ENCODE measurements at regions of chr15 and their contacts with region 1.

Region 1: DNA sequence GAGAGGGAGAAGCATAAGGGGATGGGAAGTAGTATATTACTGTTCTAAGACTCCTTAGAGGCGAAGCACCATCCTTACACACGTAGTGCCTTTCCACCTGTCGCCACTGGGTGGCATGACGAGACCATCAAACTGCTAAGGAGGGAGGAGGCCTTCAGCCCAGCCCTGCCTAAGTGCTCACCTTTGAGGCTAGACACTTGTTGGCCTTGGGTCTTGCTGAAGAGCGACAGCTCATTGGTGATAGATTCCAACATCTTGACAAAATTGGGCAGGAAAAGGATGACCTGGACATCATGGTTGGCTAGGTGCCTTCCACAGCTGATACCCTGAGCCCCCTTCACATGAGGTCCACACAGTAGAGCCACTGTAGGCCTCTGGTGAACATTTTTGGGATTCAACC is 19.6 kb downstream of the CLK3 start:
- DNase-seq: peak; percentile 41 to 74 (median 65)
- ATAC-seq: peak; percentile 88
- H3K4me3 ChIP-seq: no peak overlapping the region
- H3K4me3 Mint-ChIP-seq: no peak overlapping the region
- H3K27ac ChIP-seq: no peak overlapping the region
- H3K27ac Mint-ChIP-seq: peak overlapping the region in 2 of 9 donors; percentile 25 to 74
- H3K4me1 ChIP-seq: no peaks in the 10 kb centered on the region
- H3K4me1 Mint-ChIP-seq: peaks cover 0 to 7% (median 0%) of the 10 kb centered on the region in 7 donors
- H3K27me3 ChIP-seq: no peaks in the 10 kb centered on the region
- H3K27me3 Mint-ChIP-seq: no peaks in the 10 kb centered on the region

Region 2: GRCh38 chr15:74373731-74374647 is 261.2 kb before region 1 on chr15:
- CTCF ChIA-PET with region 1: interaction called, 6 read pairs
- POLR2A ChIA-PET with region 1: no interaction called
- intact Hi-C with region 1: loop called (anchors 1 kb)
- DNase-seq: peak; percentile 82 to 94 (median 91)
- ATAC-seq: peak; percentile 97
- H3K4me3 ChIP-seq: peak overlapping the region; percentile 98
- H3K4me3 Mint-ChIP-seq: peak overlapping the region; percentile 68 to 89 (median 84)
- H3K27ac ChIP-seq: peak overlapping the region; percentile 62
- H3K27ac Mint-ChIP-seq: peak overlapping the region; percentile 18 to 82 (median 40)
- H3K4me1 ChIP-seq: peaks cover 9% of the 10 kb centered on the region in 2 donors
- H3K4me1 Mint-ChIP-seq: peaks cover 0 to 32% (median 15%) of the 10 kb centered on the region in 7 donors
- H3K27me3 ChIP-seq: no peaks in the 10 kb centered on the region
- H3K27me3 Mint-ChIP-seq: peaks cover 0 to 31% (median 5%) of the 10 kb centered on the region in 5 donors

Region 3: GRCh38 chr15:74417246-74417645 is 218.0 kb before region 1 on chr15:
- CTCF ChIA-PET with region 1: no interaction called
- POLR2A ChIA-PET with region 1: no interaction called
- intact Hi-C with region 1: no loop called
- DNase-seq: no peak
- ATAC-seq: no peak
- H3K4me3 ChIP-seq: no peak overlapping the region
- H3K4me3 Mint-ChIP-seq: no peak overlapping the region
- H3K27ac ChIP-seq: no peak overlapping the region
- H3K27ac Mint-ChIP-seq: no peak overlapping the region
- H3K4me1 ChIP-seq: peaks cover 0 to 22% of the 10 kb centered on the region in 2 donors
- H3K4me1 Mint-ChIP-seq: peaks cover 0 to 42% (median 4%) of the 10 kb centered on the region in 7 donors
- H3K27me3 ChIP-seq: no peaks in the 10 kb centered on the region
- H3K27me3 Mint-ChIP-seq: no peaks in the 10 kb centered on the region

Region 4: GRCh38 chr15:74739905-74740304 is 104.7 kb after region 1 on chr15:
- CTCF ChIA-PET with region 1: no interaction called
- POLR2A ChIA-PET with region 1: no interaction called
- intact Hi-C with region 1: no loop called
- DNase-seq: no peak
- ATAC-seq: no peak
- H3K4me3 ChIP-seq: no peak overlapping the region
- H3K4me3 Mint-ChIP-seq: no peak overlapping the region
- H3K27ac ChIP-seq: no peak overlapping the region
- H3K27ac Mint-ChIP-seq: no peak overlapping the region
- H3K4me1 ChIP-seq: no peaks in the 10 kb centered on the region
- H3K4me1 Mint-ChIP-seq: peaks cover 0 to 5% (median 0%) of the 10 kb centered on the region in 7 donors
- H3K27me3 ChIP-seq: no peaks in the 10 kb centered on the region
- H3K27me3 Mint-ChIP-seq: peaks cover 18 to 37% (median 22%) of the 10 kb centered on the region in 5 donors

Region 5: DNA sequence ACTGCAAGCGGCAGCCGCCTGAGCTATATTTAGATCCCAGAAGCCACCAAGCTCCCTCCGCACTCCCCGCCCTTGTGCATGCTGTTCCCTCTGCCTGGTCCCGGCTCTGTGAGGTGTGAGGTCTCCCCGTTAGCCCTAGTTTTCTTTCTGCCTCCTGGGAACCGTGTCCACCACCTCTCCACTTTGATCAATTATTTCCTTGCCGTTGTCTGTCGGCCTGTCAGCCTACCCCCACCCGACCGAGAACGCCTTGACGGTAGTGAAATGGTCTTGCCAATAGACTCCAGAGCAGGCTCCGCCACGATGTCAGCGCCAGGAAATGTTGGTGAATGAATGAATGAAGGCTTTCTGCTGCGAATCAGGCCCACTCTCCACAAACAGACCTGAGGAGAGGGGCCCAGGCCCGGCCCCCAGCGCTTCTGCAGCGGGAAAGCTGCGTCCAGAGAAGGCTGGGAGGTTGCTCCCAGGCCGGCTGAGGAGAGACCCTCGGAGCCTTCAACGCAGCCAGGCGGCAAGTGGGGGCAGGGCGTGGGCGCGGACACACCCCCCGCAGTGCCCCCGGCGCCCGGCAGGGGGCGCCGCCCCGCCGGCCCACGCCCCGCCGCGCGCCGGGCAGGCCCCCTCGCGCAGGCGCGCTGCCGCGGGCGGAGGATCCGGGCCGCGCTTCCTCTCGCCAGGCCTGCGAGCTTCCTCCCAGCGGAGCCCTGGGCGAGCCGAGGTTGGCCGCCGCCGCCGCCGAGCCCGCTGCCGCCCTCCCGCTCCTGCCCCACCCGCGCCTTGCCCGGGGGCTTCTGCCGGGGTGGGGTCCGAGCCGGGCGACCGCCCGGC is 146.4 kb after region 1 on chr15 and contains the start of gene CSK:
- CTCF ChIA-PET with region 1: interaction called, 15 read pairs
- POLR2A ChIA-PET with region 1: interaction called, 12 read pairs
- intact Hi-C with region 1: no loop called
- DNase-seq: peak; percentile 68 to 90 (median 85)
- ATAC-seq: peak; percentile 80
- H3K4me3 ChIP-seq: peak within 1 kb of the TSS; percentile 91
- H3K4me3 Mint-ChIP-seq: peak within 1 kb of the TSS; percentile 87 to 99 (median 96)
- H3K27ac ChIP-seq: peak within 1 kb of the TSS; percentile 92
- H3K27ac Mint-ChIP-seq: peak within 1 kb of the TSS; percentile 90 to 100 (median 98)
- H3K4me1 ChIP-seq: peaks cover 62% of the 10 kb centered on the region in 2 donors
- H3K4me1 Mint-ChIP-seq: peaks cover 64 to 73% (median 70%) of the 10 kb centered on the region in 7 donors
- H3K27me3 ChIP-seq: no peaks in the 10 kb centered on the region
- H3K27me3 Mint-ChIP-seq: no peaks in the 10 kb centered on the region
- total RNA-seq, gene CSK: 163 to 421 (median 228) TPM

Region 6: GRCh38 chr15:74799856-74800547 is 164.8 kb after region 1 on chr15:
- CTCF ChIA-PET with region 1: interaction called, 27 read pairs
- POLR2A ChIA-PET with region 1: interaction called, 3 read pairs
- intact Hi-C with region 1: loop called (anchors 1 kb)
- DNase-seq: peak; percentile 76 to 92 (median 85)
- ATAC-seq: peak; percentile 98
- H3K4me3 ChIP-seq: no peak overlapping the region
- H3K4me3 Mint-ChIP-seq: peak overlapping the region in 6 of 10 donors; percentile 13 to 61 (median 41)
- H3K27ac ChIP-seq: peak overlapping the region; percentile 92
- H3K27ac Mint-ChIP-seq: peak overlapping the region; percentile 66 to 93 (median 84)
- H3K4me1 ChIP-seq: peaks cover 51 to 54% of the 10 kb centered on the region in 2 donors
- H3K4me1 Mint-ChIP-seq: peaks cover 31 to 60% (median 48%) of the 10 kb centered on the region in 7 donors
- H3K27me3 ChIP-seq: no peaks in the 10 kb centered on the region
- H3K27me3 Mint-ChIP-seq: no peaks in the 10 kb centered on the region

Region 7: DNA sequence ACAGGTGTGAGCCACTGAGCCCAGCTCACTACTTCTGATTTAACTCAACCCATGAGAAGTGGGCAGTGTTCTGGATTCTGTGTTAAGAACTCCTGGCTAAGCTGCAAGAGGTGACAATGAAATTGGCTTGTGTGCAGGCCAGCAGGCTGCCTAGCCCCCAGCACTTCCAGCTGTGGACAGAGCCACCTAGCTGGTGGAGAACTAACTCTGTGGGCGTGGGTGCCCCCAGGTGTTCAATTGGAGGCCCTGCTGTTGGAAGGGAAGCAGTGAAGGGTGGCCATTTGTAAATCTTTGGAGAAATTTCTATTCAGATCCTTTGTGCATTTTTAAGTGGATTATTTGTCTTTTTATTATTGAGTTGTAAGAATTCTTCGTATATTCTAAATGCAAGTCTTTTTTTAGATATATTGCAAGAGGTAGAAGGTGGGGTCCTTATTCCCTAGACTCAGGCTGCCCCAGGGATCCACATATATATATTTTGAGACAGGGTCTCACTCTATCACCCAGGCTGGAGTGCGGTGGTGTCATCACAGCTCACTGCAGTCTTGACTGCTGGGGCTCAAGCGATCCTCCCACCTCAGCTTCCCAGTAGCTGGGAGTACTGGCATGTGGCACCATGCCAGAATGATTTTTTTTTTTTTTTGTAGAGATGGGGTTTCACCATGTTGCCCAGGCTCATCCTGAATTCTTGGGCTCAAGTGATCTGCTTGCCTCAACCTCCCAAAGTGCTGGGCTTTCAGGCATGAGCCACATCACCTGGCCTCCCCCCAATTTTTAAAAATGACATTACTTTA is 353.0 kb after region 1 on chr15:
- CTCF ChIA-PET with region 1: no interaction called
- POLR2A ChIA-PET with region 1: no interaction called
- intact Hi-C with region 1: loop called in 1 of 2 experiments (anchors 1 kb)
- DNase-seq: peak in 6 of 9 donors; percentile 8 to 33 (median 18)
- ATAC-seq: peak; percentile 65
- H3K4me3 ChIP-seq: no peak overlapping the region
- H3K4me3 Mint-ChIP-seq: no peak overlapping the region
- H3K27ac ChIP-seq: no peak overlapping the region
- H3K27ac Mint-ChIP-seq: no peak overlapping the region
- H3K4me1 ChIP-seq: no peaks in the 10 kb centered on the region
- H3K4me1 Mint-ChIP-seq: peaks cover 0 to 6% (median 0%) of the 10 kb centered on the region in 7 donors
- H3K27me3 ChIP-seq: no peaks in the 10 kb centered on the region
- H3K27me3 Mint-ChIP-seq: peaks cover 0 to 23% (median 5%) of the 10 kb centered on the region in 5 donors

Region 8: GRCh38 chr15:75178171-75179075 is 543.2 kb after region 1 on chr15:
- CTCF ChIA-PET with region 1: no interaction called
- POLR2A ChIA-PET with region 1: no interaction called
- intact Hi-C with region 1: no loop called
- DNase-seq: peak in 1 of 9 donors; percentile 4
- ATAC-seq: peak; percentile 52
- H3K4me3 ChIP-seq: no peak overlapping the region
- H3K4me3 Mint-ChIP-seq: peak overlapping the region in 6 of 10 donors; percentile 6 to 56 (median 44)
- H3K27ac ChIP-seq: no peak overlapping the region
- H3K27ac Mint-ChIP-seq: peak overlapping the region in 1 of 9 donors; percentile 14
- H3K4me1 ChIP-seq: no peaks in the 10 kb centered on the region
- H3K4me1 Mint-ChIP-seq: peaks cover 4 to 28% (median 7%) of the 10 kb centered on the region in 7 donors
- H3K27me3 ChIP-seq: peaks cover 0 to 7% of the 10 kb centered on the region in 2 donors
- H3K27me3 Mint-ChIP-seq: peaks cover 28 to 54% (median 40%) of the 10 kb centered on the region in 5 donors

Region 9: DNA sequence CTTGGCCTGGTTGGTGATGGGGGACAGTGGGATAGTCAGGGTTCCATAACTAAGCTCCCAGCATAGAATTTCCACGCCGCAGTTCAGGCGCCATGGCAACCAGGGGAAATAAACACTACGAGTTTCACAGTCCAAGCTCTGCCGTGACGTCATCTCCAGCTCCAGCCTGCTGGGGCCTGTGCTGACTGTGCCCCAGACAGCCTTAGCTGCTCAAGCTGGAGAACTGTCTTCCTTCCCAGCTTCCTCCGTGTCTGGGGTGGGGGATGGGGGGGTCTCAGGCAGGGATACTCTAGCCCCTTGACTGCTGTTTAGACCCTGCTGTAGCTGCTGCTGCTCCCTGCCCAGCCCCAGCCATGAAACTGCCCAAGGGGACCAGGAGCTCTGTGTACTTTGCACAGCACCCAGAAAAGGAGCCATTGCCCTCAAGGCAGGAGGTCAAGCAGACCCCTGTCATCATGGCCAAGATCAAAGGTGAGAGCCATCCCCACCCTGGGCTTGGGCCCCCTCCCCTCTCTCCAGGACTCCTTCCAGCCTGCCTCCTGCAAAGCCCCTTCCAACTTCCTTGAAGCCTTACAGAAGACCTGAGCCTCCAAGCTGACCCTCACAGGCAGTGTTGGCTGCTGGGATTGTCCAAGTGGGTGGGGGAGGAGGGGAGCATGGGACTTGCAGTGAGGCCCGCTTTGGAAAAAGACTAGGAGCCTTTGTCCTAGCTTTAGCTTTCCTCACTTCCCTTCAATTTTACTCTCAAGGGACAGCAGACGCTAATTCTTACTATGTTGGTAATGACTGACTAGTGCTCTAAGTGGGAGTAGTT is 1088.8 kb after region 1 on chr15:
- CTCF ChIA-PET with region 1: no interaction called
- POLR2A ChIA-PET with region 1: no interaction called
- intact Hi-C with region 1: no loop called
- DNase-seq: no peak
- ATAC-seq: peak; percentile 67
- H3K4me3 ChIP-seq: no peak overlapping the region
- H3K4me3 Mint-ChIP-seq: no peak overlapping the region
- H3K27ac ChIP-seq: no peak overlapping the region
- H3K27ac Mint-ChIP-seq: no peak overlapping the region
- H3K4me1 ChIP-seq: no peaks in the 10 kb centered on the region
- H3K4me1 Mint-ChIP-seq: peaks cover 0 to 6% (median 0%) of the 10 kb centered on the region in 7 donors
- H3K27me3 ChIP-seq: no peaks in the 10 kb centered on the region
- H3K27me3 Mint-ChIP-seq: peaks cover 6 to 23% (median 7%) of the 10 kb centered on the region in 5 donors

Measured in naive thymus-derived CD4-positive, alpha-beta T cell (primary cell).